A549 (cell line): ENCODE measurements at regions of chr1 and their contacts with region 1.

Region 1: GRCh38 chr1:225881969-225882693 is at the start of gene TMEM63A:
- DNase-seq: peak; percentile 83 to 92
- ATAC-seq: peak; percentile 82 to 90
- H3K4me3 ChIP-seq: peak within 1 kb of the TSS; percentile 86
- H3K27ac ChIP-seq: peak within 1 kb of the TSS; percentile 88 to 95
- H3K4me1 ChIP-seq: peaks cover 35% of the 10 kb centered on the region
- CTCF ChIP-seq: 0 out of 3 replicates have a peak, but pooled peaks have one; percentile 18
- EP300 ChIP-seq: no peak
- POLR2A ChIP-seq: peak; percentile 79
- RAD21 ChIP-seq: peak in 1 of 2 experiments; percentile 23; a peak in 1 of 5 replicates
- polyA plus RNA-seq, gene TMEM63A: 9.5 and 12.4 TPM in 2 replicates

Region 2: GRCh38 chr1:225809842-225810578 is 72.1 kb before region 1 on chr1 and contains the start of gene EPHX1:
- CTCF ChIA-PET with region 1: interaction called, 22 read pairs
- POLR2A ChIA-PET with region 1: interaction called, 6 read pairs
- DNase-seq: peak; percentile 87 to 97
- ATAC-seq: peak; percentile 85 to 86
- H3K4me3 ChIP-seq: peak within 1 kb of the TSS; percentile 86
- H3K27ac ChIP-seq: peak within 1 kb of the TSS; percentile 93 to 99
- H3K4me1 ChIP-seq: peaks cover 40% of the 10 kb centered on the region
- CTCF ChIP-seq: peak; percentile 30; the same call in 2 of the 3 replicates
- EP300 ChIP-seq: 0 out of 5 replicates have a peak, but pooled peaks of 1 of the 2 experiments have one; percentile 8
- POLR2A ChIP-seq: peak; percentile 97
- RAD21 ChIP-seq: peak; percentile 25 to 37; a peak in 3 of 5 replicates
- polyA plus RNA-seq, gene EPHX1: 150 and 212 TPM in 2 replicates

Region 3: DNA sequence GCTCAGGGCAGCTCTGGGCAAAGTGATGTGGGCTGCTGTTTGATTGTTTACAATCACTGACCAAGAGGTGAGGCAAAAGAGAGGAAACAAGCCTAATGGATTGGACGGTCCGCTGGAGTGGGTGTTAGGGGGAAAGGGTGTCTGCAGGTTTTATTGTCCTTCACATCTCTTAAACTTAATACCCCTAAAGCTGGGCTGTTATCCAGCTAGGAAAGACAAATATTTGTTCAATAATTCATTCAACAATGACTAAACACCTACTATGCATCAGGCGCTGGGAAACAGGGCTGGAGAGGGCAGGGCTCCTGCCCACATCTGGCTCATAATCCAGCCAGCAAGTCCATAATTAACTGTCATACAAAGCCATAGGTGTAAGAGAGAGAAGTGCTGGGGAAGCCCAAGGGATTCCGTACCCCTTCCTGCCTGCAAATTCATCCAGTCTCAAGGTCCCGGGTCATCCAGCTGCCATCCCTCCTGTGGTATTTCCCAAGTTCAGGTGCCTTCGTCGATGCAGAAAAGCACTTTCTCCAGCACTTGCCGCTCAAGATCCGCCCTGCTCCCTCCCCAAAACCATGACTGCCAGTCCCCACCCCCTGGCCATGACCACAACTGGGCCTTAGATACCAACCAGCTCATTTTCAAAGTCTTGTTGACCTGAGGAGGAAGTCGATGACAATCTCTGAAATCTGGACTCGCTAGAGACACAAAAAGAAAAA is 10.6 kb before region 1 on chr1:
- CTCF ChIA-PET with region 1: interaction called, 11 read pairs
- POLR2A ChIA-PET with region 1: interaction called, 4 read pairs
- DNase-seq: peak; percentile 60 to 66
- ATAC-seq: peak; percentile 79 to 86
- H3K4me3 ChIP-seq: no peak overlapping the region
- H3K27ac ChIP-seq: peak overlapping the region in 1 of 2 experiments; percentile 30; a peak in 3 of 6 replicates
- H3K4me1 ChIP-seq: peaks cover 29% of the 10 kb centered on the region
- CTCF ChIP-seq: no peak
- EP300 ChIP-seq: no peak
- POLR2A ChIP-seq: no peak
- RAD21 ChIP-seq: no peak

Region 4: DNA sequence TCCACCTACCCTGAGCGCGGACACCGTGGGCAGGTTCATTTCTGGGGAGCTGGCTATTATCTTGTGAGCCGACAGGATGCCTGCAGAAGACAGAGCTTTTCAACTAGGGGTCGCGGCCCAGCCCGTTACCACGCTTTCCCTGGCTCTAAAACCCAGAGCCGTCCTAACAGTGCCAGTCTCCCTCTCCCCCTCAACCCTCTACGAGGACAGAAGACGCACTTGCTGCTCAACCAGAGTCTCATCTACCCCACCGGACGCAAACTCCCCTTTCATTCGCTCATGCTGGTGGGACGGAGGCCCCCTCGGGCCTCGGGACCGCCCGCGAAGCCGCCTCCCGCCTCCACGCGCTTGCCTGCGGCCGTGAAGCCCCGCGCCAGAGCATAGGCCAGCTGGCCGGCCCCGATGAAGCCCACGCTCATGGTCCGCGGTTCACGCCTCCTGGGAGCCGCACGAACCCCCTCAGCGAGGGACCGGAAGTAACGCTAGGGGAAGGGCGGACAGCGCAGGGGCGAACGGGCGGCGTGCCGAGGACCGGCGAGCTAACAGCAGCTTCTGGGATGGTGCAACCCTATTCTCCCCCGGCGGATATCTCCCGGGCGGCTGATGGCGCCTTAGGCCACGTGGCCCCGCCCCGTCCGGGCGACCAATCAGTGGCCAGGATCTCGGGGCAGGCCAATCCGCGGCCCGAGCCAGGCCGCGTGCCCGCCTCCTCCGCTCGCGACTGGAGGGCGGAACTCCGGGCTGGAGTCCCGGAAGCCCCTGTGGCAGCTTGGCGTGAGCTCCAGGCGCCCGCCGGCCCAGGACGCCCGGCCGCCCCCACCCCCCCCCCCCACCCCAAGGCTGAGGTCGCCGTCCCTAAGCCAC is 41.8 kb after region 1 on chr1 and contains the start of gene PYCR2:
- CTCF ChIA-PET with region 1: interaction called, 3 read pairs
- POLR2A ChIA-PET with region 1: interaction called, 11 read pairs
- DNase-seq: peak; percentile 95 to 98
- ATAC-seq: peak; percentile 97 to 99
- H3K4me3 ChIP-seq: peak within 1 kb of the TSS; percentile 89
- H3K27ac ChIP-seq: peak within 1 kb of the TSS; percentile 98 to 99
- H3K4me1 ChIP-seq: peaks cover 16% of the 10 kb centered on the region
- CTCF ChIP-seq: no peak
- EP300 ChIP-seq: no peak
- POLR2A ChIP-seq: peak; percentile 94
- RAD21 ChIP-seq: no peak
- polyA plus RNA-seq, gene PYCR2: 45.4 and 45.8 TPM in 2 replicates

Region 5: GRCh38 chr1:225977937-225978748 is 96.0 kb after region 1 on chr1:
- CTCF ChIA-PET with region 1: interaction called, 11 read pairs
- POLR2A ChIA-PET with region 1: no interaction called
- DNase-seq: no peak
- ATAC-seq: 0 out of 6 replicates have a peak, but pooled peaks of 1 of the 2 experiments have one; percentile 27
- H3K4me3 ChIP-seq: no peak overlapping the region
- H3K27ac ChIP-seq: no peak overlapping the region
- H3K4me1 ChIP-seq: no peaks in the 10 kb centered on the region
- CTCF ChIP-seq: no peak
- EP300 ChIP-seq: no peak
- POLR2A ChIP-seq: no peak
- RAD21 ChIP-seq: no peak